Activated CD8-positive, alpha-beta T cell treated with anti-CD3 and anti-CD28 coated beads, Interleukin-2, amount 10 ng/mL, durations not matched to agents 7 days and 5 days (primary cell): ENCODE measurements at regions of chr17 and their contacts with region 1.

Region 1: GRCh38 chr17:76182016-76182764 is 41.1 kb upstream of the FOXJ1 start:
- DNase-seq: peak; percentile 97
- ATAC-seq: peak; percentile 87
- H3K4me3 Mint-ChIP-seq: no peak overlapping the region
- H3K27ac Mint-ChIP-seq: peak overlapping the region; percentile 87
- H3K4me1 Mint-ChIP-seq: peaks cover 72% of the 10 kb centered on the region
- H3K27me3 Mint-ChIP-seq: no peaks in the 10 kb centered on the region

Region 2: DNA sequence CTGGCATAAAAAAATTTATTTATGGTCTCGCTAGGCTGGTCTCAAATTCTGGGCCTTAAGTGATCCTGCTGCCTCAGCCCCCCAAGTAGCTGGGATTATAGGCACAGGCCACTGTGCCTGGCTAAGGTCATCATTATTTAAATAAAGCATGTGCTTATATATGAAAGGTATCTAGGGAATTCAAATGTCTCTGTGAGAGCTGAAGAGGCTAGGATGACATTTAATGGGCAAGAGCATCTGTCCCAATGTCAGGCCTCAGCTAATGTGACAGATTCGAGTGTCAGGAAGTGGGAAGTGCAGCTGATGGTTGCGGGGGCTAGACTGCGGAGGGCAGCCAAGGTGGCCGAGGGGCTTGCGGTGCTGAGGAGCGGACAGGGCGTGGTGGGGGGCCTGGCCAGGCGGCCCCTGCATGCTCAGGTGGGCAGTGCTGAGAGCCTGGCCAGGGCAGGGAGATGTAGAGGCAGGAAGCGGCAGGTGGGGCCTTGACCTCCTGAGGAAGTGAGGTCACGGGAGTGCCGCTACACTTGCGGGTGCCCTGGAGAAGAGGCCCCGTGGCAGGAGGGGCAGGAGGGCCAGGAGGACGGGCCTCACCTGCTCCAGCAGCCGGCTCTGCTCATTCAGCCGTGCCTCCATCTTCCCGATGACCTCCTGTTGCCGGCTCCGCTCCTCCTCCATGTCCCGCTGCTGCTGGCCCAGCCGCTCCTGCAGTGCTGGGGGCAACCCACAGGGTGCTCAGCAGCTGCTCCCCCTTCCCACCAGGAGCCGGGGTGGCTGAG is 264.9 kb before region 1 on chr17:
- CTCF ChIA-PET with region 1: no interaction called
- POLR2A ChIA-PET with region 1: no interaction called
- DNase-seq: no peak
- ATAC-seq: no peak
- H3K4me3 Mint-ChIP-seq: no peak overlapping the region
- H3K27ac Mint-ChIP-seq: peak overlapping the region; percentile 4
- H3K4me1 Mint-ChIP-seq: peaks cover 8% of the 10 kb centered on the region
- H3K27me3 Mint-ChIP-seq: no peaks in the 10 kb centered on the region

Region 3: DNA sequence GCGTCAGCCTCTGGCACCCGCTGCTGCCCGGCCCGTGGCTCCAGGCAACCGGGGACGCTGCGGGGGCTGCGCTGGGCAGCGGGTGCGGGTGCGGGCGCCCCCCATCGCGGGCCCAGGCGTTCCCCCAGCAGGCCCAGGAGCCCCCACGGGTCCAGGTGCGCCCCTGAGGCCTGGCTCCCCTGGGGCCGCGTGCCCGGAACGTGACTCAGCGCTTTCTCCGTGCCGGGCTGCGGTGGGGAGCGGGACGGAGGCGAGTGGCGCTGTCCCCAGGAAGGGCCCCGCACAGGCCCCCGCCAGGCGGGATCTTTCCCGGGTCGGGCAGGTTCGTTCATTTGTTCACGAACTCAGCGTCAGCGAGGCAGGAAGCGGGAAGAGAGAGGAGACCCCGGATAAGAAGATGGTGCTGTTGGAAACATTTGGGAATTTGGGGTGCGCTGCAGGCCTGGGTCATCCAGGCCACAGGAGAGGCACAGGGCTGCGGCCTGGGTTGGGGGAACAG is 60.2 kb before region 1 on chr17:
- CTCF ChIA-PET with region 1: interaction called, 205 read pairs
- POLR2A ChIA-PET with region 1: interaction called, 23 read pairs
- DNase-seq: no peak
- ATAC-seq: peak; percentile 31
- H3K4me3 Mint-ChIP-seq: peak overlapping the region; percentile 26
- H3K27ac Mint-ChIP-seq: peak overlapping the region; percentile 73
- H3K4me1 Mint-ChIP-seq: peaks cover 45% of the 10 kb centered on the region
- H3K27me3 Mint-ChIP-seq: no peaks in the 10 kb centered on the region

Region 4: DNA sequence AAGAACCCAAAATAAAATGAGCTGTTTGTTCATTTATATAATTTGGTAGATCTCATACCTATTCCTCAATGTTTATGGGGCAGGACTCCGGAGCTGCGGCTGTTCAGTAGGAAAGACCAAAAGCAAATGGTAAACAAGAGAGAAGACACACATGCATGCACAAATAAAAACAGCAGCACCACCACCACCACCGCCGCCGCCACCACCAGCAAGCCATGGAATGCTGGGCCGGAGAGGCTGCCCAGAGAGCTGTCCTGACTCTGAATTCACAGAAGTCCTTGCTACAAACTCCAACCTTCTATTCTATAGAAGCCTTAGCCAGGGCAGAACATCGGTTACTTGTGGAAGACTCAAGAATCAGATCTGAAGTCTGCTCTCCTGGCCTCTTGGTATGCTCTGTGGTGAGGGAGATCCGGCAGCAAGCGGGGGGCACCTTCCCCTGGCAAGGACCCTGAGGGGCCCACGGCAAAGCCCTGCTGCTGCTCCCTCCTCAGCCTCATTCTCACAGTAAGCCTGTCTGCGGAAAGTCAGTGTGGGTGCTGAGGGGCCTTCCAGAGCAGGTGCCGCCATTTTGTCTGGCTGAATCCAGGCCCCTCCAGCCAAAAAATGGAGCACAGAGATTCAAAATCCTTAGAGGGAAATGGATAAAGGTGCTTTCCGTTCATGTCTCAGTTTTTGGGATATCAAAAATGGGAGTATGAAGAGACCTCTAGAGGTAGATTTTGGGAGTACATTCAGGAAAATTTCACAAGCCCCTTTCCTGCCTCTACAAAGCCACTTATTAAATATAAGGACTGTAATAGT is 34.8 kb before region 1 on chr17:
- CTCF ChIA-PET with region 1: interaction called, 106 read pairs
- POLR2A ChIA-PET with region 1: interaction called, 61 read pairs
- DNase-seq: no peak
- ATAC-seq: no peak
- H3K4me3 Mint-ChIP-seq: no peak overlapping the region
- H3K27ac Mint-ChIP-seq: peak overlapping the region; percentile 97
- H3K4me1 Mint-ChIP-seq: peaks cover 79% of the 10 kb centered on the region
- H3K27me3 Mint-ChIP-seq: no peaks in the 10 kb centered on the region

Region 5: GRCh38 chr17:76160896-76161528 is 21.2 kb before region 1 on chr17:
- CTCF ChIA-PET with region 1: interaction called, 22 read pairs
- POLR2A ChIA-PET with region 1: interaction called, 9 read pairs
- DNase-seq: no peak
- ATAC-seq: no peak
- H3K4me3 Mint-ChIP-seq: no peak overlapping the region
- H3K27ac Mint-ChIP-seq: no peak overlapping the region
- H3K4me1 Mint-ChIP-seq: no peaks in the 10 kb centered on the region
- H3K27me3 Mint-ChIP-seq: no peaks in the 10 kb centered on the region

Region 6: DNA sequence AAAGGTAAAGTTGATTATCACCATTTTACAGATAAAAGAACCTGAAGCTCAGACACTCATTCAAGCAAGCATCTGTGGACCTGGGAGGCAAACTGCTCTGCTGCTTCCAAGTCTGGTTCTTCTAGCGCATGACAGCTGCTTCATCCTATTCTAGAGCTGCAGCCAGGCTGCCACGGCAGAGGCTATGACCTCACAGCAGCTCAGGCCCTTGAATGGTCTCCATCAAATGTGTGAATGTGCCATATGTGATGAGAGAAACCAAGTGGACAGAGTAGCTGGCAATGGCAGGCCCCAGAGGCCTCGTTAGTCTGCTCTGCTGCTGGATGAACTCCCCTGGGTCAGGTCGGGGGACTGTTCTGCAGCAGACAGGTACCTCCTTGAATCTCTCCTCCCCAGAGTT is 10.5 kb before region 1 on chr17:
- CTCF ChIA-PET with region 1: interaction called, 19 read pairs
- POLR2A ChIA-PET with region 1: interaction called, 3 read pairs
- DNase-seq: no peak
- ATAC-seq: no peak
- H3K4me3 Mint-ChIP-seq: no peak overlapping the region
- H3K27ac Mint-ChIP-seq: no peak overlapping the region
- H3K4me1 Mint-ChIP-seq: peaks cover 6% of the 10 kb centered on the region
- H3K27me3 Mint-ChIP-seq: no peaks in the 10 kb centered on the region

Region 7: DNA sequence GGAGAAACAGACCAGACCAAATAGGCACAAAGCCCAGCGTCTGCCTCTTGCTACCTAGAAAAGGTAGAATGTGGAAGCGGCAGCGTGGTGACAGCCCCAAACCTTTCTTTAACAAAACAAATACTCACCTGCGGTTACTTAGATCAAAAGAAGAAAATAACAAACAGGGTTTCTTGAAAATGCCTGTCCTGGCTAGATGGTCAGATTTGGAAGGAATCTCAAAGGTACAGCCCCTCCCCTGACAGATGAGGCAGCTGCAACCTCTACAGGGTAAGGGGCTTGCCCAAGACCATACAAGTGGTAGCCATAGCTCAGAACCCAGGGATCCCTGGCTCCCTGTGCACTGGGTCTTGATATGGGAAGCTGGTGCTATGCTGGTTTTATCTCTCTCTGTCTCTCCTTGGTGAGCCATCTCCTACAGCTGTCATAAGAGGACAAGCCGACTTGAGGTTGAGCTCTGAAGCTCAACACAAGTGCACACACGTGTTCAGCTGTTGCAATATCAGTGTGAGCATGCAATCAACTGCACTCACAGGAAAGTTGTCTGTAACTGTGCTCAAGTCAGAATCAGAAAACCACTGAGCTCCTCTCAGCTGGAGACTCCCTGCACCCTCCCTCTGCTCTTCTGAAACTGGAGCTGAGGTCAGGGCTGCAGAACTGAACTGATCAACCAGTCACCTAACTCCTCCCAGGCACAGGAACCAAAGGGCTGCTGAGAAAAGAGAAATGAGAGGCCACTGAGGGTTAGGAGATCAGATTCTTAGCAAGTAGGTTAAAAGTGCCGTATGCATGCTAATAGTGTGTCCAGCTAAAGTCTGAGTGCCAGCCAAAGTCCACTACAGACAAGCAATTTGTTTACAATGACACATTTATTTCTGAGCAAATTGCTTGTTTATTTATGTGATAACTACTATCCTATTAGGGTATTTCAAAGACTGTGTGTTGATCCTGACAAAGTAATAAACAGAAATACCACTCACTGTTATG is 64.2 kb after region 1 on chr17:
- CTCF ChIA-PET with region 1: interaction called, 16 read pairs
- POLR2A ChIA-PET with region 1: interaction called, 14 read pairs
- DNase-seq: peak; percentile 91
- ATAC-seq: peak; percentile 97
- H3K4me3 Mint-ChIP-seq: peak overlapping the region; percentile 62
- H3K27ac Mint-ChIP-seq: peak overlapping the region; percentile 91
- H3K4me1 Mint-ChIP-seq: peaks cover 84% of the 10 kb centered on the region
- H3K27me3 Mint-ChIP-seq: no peaks in the 10 kb centered on the region

Region 8: GRCh38 chr17:76264755-76265596 is 82.8 kb after region 1 on chr17 and contains the start of gene UBALD2:
- CTCF ChIA-PET with region 1: interaction called, 112 read pairs
- POLR2A ChIA-PET with region 1: interaction called, 722 read pairs
- DNase-seq: peak; percentile 100
- ATAC-seq: peak; percentile 84
- H3K4me3 Mint-ChIP-seq: peak within 1 kb of the TSS; percentile 95
- H3K27ac Mint-ChIP-seq: peak within 1 kb of the TSS; percentile 99
- H3K4me1 Mint-ChIP-seq: peaks cover 58% of the 10 kb centered on the region
- H3K27me3 Mint-ChIP-seq: no peaks in the 10 kb centered on the region
- total RNA-seq, gene UBALD2: 318 to 359 TPM